ENCODE measurements at regions of chr12 and their contacts with region 1.

Region 1: DNA sequence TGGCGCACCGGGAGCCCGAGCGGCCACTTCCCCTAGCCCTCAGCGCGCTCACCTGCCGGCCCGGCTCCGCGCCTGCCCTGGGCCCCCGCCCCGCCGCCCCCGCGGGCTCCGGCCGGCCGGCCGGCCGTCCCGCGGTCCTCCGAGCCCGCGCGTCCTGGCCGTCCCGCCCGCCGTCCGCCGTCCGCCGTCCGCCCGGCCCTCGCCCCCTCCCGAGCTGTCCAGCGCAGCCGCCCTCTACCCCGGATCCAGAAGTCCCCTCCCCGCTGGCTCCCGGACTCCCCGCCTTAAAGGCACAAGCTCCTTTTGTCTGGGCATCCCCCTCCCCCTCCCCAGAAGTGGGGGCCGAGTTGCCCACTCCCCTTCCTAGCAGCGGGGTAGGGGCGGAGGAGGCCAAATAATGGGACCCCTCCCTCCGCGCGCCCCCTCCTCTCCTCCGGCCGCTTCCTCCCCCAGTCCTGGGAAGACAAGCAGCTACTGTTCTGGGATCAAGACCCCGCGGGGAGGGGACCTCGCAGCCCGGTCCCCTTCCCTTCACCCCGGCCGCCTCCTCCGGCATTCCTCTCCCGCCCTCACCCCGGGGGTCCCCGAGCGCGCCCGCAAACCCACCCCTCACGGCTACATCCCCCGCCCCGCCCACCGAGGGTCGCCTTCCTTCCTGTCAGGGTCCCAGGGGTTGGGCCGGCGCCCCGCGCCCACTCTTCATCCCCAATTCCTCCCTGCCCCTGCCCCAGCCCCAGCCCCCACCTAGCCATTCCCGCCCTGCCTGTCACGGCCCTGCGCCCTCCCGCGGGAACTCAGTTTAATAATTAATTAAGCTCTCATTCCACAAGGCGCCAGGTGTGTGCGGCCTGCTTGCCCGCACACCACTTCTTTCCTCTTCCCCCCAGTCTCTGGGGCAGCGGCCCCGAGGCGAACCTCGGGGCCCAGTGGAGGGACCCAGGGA is at the start of gene ADCY6:
- DNase-seq: peak; percentile 67
- ATAC-seq: peak; percentile 91
- H3K4me3 ChIP-seq: peak within 1 kb of the TSS; percentile 81 to 90 (median 86)
- H3K27ac ChIP-seq: peak within 1 kb of the TSS; percentile 56
- H3K4me1 ChIP-seq: peaks cover 29% of the 10 kb centered on the region
- H3K27me3 ChIP-seq: no peaks in the 10 kb centered on the region
- CTCF ChIP-seq: no peak
- EP300 ChIP-seq: no peak
- POLR2A ChIP-seq: peak; percentile 31 to 45; a peak in 2 of 4 replicates
- RAD21 ChIP-seq: no peak
- total RNA-seq, gene ADCY6: 6.8 and 10.6 TPM in 2 replicates

Region 2: DNA sequence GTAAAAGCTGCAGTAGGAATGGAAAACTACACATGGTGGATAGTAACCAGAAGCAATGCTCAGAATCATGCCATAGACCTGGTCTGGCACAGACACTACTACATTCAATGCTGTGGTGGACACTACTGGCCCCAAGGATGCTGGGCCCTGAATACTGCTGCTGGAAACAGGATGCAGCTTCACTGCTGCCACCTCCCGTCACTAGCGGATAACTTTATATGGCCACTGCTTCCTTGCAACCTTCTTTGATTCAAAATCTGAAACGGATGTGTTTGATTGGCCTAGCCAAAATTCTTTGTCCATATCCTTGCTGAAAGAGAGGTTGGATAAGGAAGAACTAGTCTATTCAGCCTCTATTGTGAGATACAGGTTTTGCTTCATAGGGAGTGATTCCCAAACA is 30.9 kb before region 1 on chr12:
- CTCF ChIA-PET with region 1: interaction called, 41 read pairs
- POLR2A ChIA-PET with region 1: interaction called, 14 read pairs
- in situ Hi-C with region 1: no loop called
- intact Hi-C with region 1: no loop called
- DNase-seq: no peak
- ATAC-seq: peak; percentile 74
- H3K4me3 ChIP-seq: no peak overlapping the region
- H3K27ac ChIP-seq: no peak overlapping the region
- H3K4me1 ChIP-seq: 0 out of 2 replicates have a peak, but pooled peaks cover 1% of the 10 kb centered on the region
- H3K27me3 ChIP-seq: peaks cover 0 to 2% of the 10 kb centered on the region in 2 experiments; a peak in 1 of 5 replicates
- CTCF ChIP-seq: no peak
- EP300 ChIP-seq: no peak
- POLR2A ChIP-seq: no peak
- RAD21 ChIP-seq: no peak

Region 3: DNA sequence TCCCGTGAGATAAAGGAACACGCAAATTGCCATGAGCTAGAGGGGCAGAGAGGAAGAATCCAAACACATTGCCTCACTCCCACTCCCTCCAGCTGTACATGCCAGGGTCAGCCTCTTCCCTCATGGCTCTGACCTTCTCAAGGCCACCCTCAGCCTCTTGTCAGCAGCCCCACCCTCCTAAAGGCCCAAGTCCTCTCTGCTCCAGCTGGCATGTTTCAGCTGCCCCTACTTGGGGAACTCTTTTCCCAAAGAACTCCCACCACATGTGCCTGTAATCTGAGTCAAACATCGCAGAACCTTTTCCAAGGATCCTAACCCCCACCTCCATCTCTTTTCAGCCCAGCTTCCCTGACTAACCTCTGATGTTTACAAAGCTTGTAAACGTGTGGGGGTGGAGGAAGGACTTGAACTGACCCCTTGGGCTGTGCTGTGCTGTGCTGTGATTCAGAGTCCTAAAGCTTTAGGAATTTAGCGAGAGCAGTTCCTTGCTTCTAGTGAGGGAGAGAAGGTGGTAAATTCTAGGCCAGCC is 21.8 kb after region 1 on chr12:
- CTCF ChIA-PET with region 1: no interaction called
- POLR2A ChIA-PET with region 1: interaction called, 11 read pairs
- in situ Hi-C with region 1: no loop called
- intact Hi-C with region 1: no loop called
- DNase-seq: peak; percentile 34
- ATAC-seq: peak; percentile 25
- H3K4me3 ChIP-seq: peak overlapping the region in 1 of 3 experiments; percentile 36; a peak in 1 of 6 replicates
- H3K27ac ChIP-seq: no peak overlapping the region
- H3K4me1 ChIP-seq: peaks cover 58% of the 10 kb centered on the region
- H3K27me3 ChIP-seq: peaks cover 0 to 23% of the 10 kb centered on the region in 2 experiments; a peak in 3 of 5 replicates
- CTCF ChIP-seq: no peak
- EP300 ChIP-seq: peak in 1 of 2 experiments; percentile 40; a peak in 1 of 4 replicates
- POLR2A ChIP-seq: no peak
- RAD21 ChIP-seq: no peak

Measured in HepG2 (cell line).